SK-N-SH (cell line): ENCODE measurements at regions of chr14 and their contacts with region 1.

Region 1: DNA sequence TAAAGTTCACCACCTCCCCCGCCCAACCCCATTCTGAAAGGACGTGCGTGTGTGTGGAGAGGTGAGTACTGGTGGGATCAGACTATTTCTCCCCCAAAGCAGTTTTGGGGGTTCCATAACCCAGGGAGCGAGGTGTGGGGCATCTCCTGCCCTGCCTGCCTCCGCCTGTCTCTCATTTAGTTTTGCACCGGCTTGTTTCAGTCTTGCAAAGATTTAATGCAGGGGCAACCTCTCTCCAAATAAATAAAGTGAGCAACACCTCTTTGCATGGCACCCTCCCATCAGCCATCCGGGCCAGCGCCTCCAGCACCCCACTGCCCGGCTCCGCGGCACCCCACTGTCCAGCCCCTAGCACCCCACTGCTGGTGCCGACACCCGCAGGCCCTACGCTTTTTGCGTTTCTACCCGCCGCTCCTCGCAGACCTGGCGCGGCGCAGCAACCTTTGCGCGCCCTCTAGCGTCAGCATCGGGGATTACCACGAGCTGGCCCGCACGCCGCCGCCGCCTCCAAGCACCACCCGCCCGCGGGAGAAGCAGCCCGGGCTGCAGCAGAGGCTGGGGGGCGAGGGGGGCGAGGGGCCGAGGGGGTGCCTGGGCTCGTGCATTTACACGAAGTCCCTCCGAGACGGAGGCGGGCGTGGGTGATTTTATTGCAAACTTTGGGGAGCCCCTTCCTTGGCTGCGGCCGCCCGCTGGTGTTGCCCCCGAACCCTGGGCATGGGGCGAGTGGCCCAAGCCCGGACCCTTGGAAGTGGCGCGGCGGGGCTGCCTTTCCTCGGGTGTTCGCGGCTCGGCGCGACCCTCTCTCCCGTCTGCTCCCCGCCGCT is 55.8 kb upstream of the VRK1 start:
- DNase-seq: peak; percentile 91
- H3K4me3 ChIP-seq: peak overlapping the region; percentile 57 to 72
- H3K27ac ChIP-seq: no peak overlapping the region
- H3K4me1 ChIP-seq: peaks cover 0 to 3% of the 10 kb centered on the region in 2 experiments; a peak in 1 of 4 replicates
- H3K27me3 ChIP-seq: peaks cover 17% of the 10 kb centered on the region; the same call in 1 of the 2 replicates
- CTCF ChIP-seq: peak; percentile 77
- EP300 ChIP-seq: no peak
- RAD21 ChIP-seq: peak; percentile 79

Region 2: DNA sequence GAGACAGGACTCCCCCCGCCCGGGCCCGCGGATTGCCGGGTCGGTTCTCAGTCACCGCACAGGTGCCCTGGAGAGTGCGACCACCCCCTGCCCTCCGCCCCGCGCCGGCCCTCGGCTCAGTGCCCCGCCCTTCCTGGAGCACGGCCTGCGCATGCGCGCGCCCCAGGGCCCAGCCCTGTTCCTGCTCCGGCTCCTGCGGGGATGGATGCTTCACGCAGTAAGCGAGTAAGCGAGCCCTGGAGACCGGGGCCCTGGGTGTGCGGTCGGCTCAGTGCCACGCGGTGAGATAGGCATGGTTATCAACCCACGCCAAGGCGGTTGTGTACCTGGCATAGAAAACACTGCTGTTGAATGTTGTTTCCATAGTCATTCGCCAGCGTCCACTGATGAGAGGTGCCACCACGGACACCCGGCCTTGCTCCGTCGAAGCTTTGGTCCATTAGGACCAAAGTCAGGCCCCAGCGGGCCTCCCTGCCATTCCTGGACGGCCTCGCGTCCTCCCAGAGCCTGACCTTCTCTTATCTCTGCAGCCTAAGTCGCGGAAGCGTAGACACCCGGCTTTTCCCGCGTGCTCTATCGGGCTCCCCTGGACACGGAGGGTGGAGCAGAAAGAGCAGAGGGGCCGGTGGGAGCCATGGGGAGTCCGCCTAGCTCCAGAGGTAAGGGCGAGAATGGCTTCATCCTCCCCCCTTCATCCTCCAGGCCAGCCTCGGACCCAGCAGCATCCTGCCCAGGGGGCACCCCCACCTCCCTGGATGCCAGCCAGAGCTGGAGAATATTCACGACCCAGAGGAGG is 148.6 kb before region 1 on chr14:
- CTCF ChIA-PET with region 1: interaction called, 65 read pairs
- POLR2A ChIA-PET with region 1: no interaction called
- DNase-seq: peak; percentile 96
- H3K4me3 ChIP-seq: peak overlapping the region; percentile 50 to 58
- H3K27ac ChIP-seq: no peak overlapping the region
- H3K4me1 ChIP-seq: peaks cover 0 to 12% of the 10 kb centered on the region in 2 experiments; a peak in 1 of 4 replicates
- H3K27me3 ChIP-seq: no peaks in the 10 kb centered on the region
- CTCF ChIP-seq: no peak
- EP300 ChIP-seq: no peak
- RAD21 ChIP-seq: no peak

Region 3: GRCh38 chr14:96762650-96763049 is 21.3 kb after region 1 on chr14:
- CTCF ChIA-PET with region 1: interaction called, 13 read pairs
- POLR2A ChIA-PET with region 1: no interaction called
- DNase-seq: peak; percentile 81
- H3K4me3 ChIP-seq: peak overlapping the region; percentile 24 to 33; a peak in 3 of 4 replicates
- H3K27ac ChIP-seq: no peak overlapping the region; a peak in 1 of 4 replicates
- H3K4me1 ChIP-seq: no peaks in the 10 kb centered on the region; a peak in 2 of 4 replicates
- H3K27me3 ChIP-seq: no peaks in the 10 kb centered on the region
- CTCF ChIP-seq: no peak
- EP300 ChIP-seq: no peak
- RAD21 ChIP-seq: no peak